ENCODE measurements at regions of chr7 and their contacts with region 1.

Region 1: DNA sequence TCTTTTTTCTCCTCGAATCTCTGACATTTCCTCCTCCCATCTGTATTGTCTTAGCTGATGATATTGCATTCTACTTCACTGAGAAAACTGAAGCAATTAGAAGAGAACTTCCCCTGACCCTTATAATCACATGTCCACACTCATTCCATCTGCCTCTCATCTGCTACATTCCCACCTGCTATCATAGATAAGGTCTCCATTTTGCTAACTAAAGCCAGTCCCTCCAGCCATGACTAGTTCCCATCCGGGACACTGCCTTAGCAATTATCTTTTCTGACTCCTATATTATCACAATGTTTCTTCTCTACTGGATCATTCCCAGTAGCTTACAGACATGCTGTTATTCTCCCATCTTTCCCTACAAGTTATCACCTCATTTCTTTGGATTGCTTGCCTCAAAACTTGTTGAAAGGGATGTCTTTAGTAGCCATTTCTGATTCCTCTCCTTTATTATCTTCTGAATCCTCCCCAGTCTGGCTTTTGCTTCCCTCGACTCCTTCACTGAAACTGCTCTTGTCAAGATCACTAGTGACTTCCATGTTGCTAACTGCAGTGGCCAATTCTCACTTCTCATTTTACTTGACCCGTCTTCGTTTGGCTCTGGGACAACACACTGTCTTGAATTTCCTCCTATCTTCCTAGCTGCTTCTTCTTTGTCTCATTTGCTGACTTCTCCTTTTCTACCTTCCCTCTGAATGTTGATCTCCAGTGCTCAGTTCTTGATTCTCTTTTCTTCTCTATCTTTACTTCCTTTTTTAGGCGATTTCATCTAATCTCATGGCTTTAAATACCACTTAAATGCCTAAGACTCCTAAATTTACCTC is 35.9 kb downstream of the FZD1 start:
- DNase-seq: peak in 1 of 9 experiments; percentile 5
- ATAC-seq: no peak
- H3K4me3 ChIP-seq: no peak overlapping the region
- H3K4me3 Mint-ChIP-seq: no peak overlapping the region
- H3K27ac ChIP-seq: no peak overlapping the region
- H3K27ac Mint-ChIP-seq: no peak overlapping the region
- H3K4me1 ChIP-seq: no peaks in the 10 kb centered on the region
- H3K4me1 Mint-ChIP-seq: no peaks in the 10 kb centered on the region
- H3K27me3 ChIP-seq: no peaks in the 10 kb centered on the region
- H3K27me3 Mint-ChIP-seq: peaks cover 4% of the 10 kb centered on the region
- CTCF ChIP-seq: no peak

Region 2: DNA sequence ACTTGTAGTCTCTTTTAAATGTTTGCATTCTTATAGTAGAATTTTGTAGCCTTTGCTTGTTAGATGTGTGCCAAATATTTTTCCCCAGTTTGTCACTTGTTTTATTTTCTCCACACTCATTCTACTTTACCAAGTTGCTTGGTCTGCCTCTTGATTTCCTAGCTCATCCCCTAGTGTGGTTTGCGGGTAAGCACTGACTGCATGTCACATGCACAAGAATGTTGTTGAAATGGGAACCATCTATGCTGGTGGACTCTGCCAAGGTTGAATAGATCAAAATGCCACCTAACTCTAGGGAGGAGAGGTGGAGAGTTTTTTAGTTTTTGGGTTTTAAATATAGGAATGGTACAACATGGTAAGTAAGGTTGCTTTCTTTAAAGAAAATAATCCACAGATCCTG is 11.7 kb after region 1 on chr7:
- CTCF ChIA-PET with region 1: no interaction called
- POLR2A ChIA-PET with region 1: no interaction called
- intact Hi-C with region 1: loop called in 1 of 2 experiments (anchors 1 kb)
- DNase-seq: no peak
- ATAC-seq: no peak
- H3K4me3 ChIP-seq: no peak overlapping the region
- H3K4me3 Mint-ChIP-seq: no peak overlapping the region
- H3K27ac ChIP-seq: no peak overlapping the region
- H3K27ac Mint-ChIP-seq: no peak overlapping the region
- H3K4me1 ChIP-seq: no peaks in the 10 kb centered on the region
- H3K4me1 Mint-ChIP-seq: no peaks in the 10 kb centered on the region
- H3K27me3 ChIP-seq: no peaks in the 10 kb centered on the region
- H3K27me3 Mint-ChIP-seq: no peaks in the 10 kb centered on the region
- CTCF ChIP-seq: no peak

Measured in CD8-positive, alpha-beta T cell (primary cell).